ENCODE measurements at regions of chr7 and their contacts with region 1.

Region 1: DNA sequence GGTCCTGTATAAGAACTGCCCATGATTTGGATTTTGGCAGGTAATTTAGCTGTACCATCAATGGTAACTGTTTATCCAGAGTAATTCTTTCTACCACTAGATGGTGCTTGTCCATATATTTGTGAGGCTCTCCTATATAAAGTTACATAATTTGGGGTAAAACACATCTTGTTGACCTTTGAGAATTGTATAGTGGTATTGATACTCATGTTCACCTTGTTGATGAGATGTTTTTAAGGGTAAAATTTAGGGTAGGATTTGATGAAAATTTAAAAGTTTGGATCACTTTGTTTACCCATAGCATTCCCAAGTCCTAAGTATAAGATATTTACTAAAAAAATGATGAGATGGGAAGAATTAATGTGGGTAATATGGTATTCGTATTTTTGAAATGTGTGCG is 31.6 kb downstream of the ST7 start:
- DNase-seq: peak; percentile 52
- H3K4me3 ChIP-seq: no peak overlapping the region
- H3K27ac ChIP-seq: no peak overlapping the region
- H3K4me1 ChIP-seq: peaks cover 0 to 8% of the 10 kb centered on the region in 2 experiments; a peak in 1 of 4 replicates
- H3K27me3 ChIP-seq: no peaks in the 10 kb centered on the region
- CTCF ChIP-seq: peak; percentile 98
- EP300 ChIP-seq: no peak
- RAD21 ChIP-seq: peak; percentile 74

Region 2: GRCh38 chr7:116859323-116859722 is 125.6 kb before region 1 on chr7:
- CTCF ChIA-PET with region 1: no interaction called
- POLR2A ChIA-PET with region 1: no interaction called
- DNase-seq: no peak
- H3K4me3 ChIP-seq: no peak overlapping the region
- H3K27ac ChIP-seq: no peak overlapping the region
- H3K4me1 ChIP-seq: peaks cover 0 to 7% of the 10 kb centered on the region in 2 experiments; a peak in 2 of 4 replicates
- H3K27me3 ChIP-seq: peaks cover 15% of the 10 kb centered on the region
- CTCF ChIP-seq: no peak
- EP300 ChIP-seq: no peak
- RAD21 ChIP-seq: no peak

Region 3: GRCh38 chr7:116953727-116954442 is 31.0 kb before region 1 on chr7:
- CTCF ChIA-PET with region 1: interaction called, 11 read pairs
- POLR2A ChIA-PET with region 1: interaction called, 3 read pairs
- DNase-seq: peak; percentile 92
- H3K4me3 ChIP-seq: peak overlapping the region; percentile 85 to 91
- H3K27ac ChIP-seq: peak overlapping the region; percentile 97
- H3K4me1 ChIP-seq: peaks cover 19 to 23% of the 10 kb centered on the region in 2 experiments; a peak in 3 of 4 replicates
- H3K27me3 ChIP-seq: no peaks in the 10 kb centered on the region
- CTCF ChIP-seq: no peak; the same call in 1 of the 2 replicates
- EP300 ChIP-seq: peak in 1 of 2 experiments; percentile 28; a peak in 1 of 4 replicates
- RAD21 ChIP-seq: no peak

Region 4: GRCh38 chr7:116999311-116999710 is 14.4 kb after region 1 on chr7:
- CTCF ChIA-PET with region 1: interaction called, 35 read pairs
- POLR2A ChIA-PET with region 1: no interaction called
- DNase-seq: no peak
- H3K4me3 ChIP-seq: no peak overlapping the region
- H3K27ac ChIP-seq: peak overlapping the region in 1 of 2 experiments; percentile 14; a peak in 2 of 4 replicates
- H3K4me1 ChIP-seq: no peaks in the 10 kb centered on the region
- H3K27me3 ChIP-seq: no peaks in the 10 kb centered on the region
- CTCF ChIP-seq: no peak
- EP300 ChIP-seq: peak in 1 of 2 experiments; percentile 14; a peak in 1 of 4 replicates
- RAD21 ChIP-seq: no peak

Region 5: DNA sequence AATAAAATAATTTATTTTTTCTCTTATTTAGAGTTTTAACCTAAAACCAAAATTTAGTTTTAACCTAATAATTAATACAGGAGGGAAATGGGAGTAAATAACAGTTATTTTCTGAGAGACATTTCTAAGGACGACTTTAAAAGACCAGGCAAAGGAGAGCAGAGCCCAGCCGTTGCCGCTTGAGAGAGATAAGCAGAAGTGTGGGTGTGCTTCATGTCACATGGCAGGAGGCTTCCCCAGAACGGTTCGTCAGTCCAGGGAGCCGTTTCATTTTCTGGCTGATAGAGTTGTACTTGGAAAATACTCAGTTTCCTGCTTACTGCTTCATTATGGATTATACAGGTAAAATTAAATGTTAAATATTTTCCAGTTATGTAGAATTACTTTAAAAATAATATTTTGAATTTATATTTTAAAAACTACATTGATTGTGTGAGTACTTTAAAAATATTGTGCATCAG is 29.8 kb after region 1 on chr7:
- CTCF ChIA-PET with region 1: interaction called, 58 read pairs
- POLR2A ChIA-PET with region 1: no interaction called
- DNase-seq: peak; percentile 66
- H3K4me3 ChIP-seq: peak overlapping the region; percentile 28 to 34; a peak in 3 of 4 replicates
- H3K27ac ChIP-seq: peak overlapping the region; percentile 30 to 79
- H3K4me1 ChIP-seq: peaks cover 20 to 23% of the 10 kb centered on the region in 2 experiments; a peak in 3 of 4 replicates
- H3K27me3 ChIP-seq: no peaks in the 10 kb centered on the region
- CTCF ChIP-seq: no peak
- EP300 ChIP-seq: peak in 1 of 2 experiments; percentile 27; a peak in 1 of 4 replicates
- RAD21 ChIP-seq: 0 out of 2 replicates have a peak, but pooled peaks have one; percentile 3

Region 6: DNA sequence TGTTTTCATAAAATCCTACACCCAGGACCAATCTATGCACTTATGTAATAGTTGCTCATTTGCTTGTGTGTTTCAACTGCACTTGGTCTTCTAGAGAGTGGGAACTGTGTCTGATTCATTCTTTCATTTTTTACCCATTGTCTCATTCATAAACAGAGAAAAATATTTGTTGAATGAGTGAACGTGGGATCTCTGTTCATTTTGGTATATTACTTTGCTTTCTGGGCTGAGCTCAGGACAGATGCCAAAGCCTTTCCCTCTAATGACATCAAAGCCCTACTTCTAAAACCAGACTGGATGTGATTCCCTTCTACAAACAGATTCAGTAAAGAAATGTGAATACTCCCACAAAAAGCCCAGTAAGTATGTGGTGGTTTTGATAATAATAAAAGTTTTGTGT is 113.5 kb after region 1 on chr7:
- CTCF ChIA-PET with region 1: interaction called, 12 read pairs
- POLR2A ChIA-PET with region 1: no interaction called
- DNase-seq: no peak
- H3K4me3 ChIP-seq: no peak overlapping the region
- H3K27ac ChIP-seq: peak overlapping the region in 1 of 2 experiments; percentile 96; a peak in 2 of 4 replicates
- H3K4me1 ChIP-seq: peaks cover 4 to 9% of the 10 kb centered on the region in 2 experiments; a peak in 3 of 4 replicates
- H3K27me3 ChIP-seq: no peaks in the 10 kb centered on the region
- CTCF ChIP-seq: no peak
- EP300 ChIP-seq: peak in 1 of 2 experiments; percentile 60; a peak in 1 of 4 replicates
- RAD21 ChIP-seq: no peak

Region 7: DNA sequence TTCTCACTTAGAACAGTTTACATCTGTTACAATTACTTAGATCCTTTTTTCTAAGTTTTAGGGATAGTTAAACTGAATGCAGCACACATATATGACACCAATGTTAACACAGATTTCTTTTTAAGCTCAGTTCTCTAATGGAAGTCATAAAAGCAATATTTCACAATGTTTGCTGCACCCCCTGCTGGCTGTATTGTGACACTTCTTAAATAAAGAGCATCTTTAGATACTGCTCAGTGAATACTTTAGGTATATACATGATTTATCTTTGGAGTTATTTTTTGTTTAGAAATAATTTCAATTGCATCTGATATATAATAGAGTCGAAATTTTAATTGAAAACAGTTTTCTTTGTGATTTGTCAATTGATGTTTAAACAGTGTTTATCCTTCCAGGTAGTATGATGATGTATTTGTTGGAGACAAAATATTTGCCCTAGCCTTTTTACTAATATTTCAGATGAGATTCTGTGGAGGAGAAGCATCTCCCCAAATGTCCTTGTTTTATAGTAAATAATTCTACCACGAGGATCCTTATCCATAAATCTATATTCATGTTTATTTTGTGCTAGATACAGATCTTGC is 142.8 kb after region 1 on chr7:
- CTCF ChIA-PET with region 1: interaction called, 668 read pairs
- POLR2A ChIA-PET with region 1: no interaction called
- DNase-seq: no peak
- H3K4me3 ChIP-seq: no peak overlapping the region
- H3K27ac ChIP-seq: peak overlapping the region in 1 of 2 experiments; percentile 94; a peak in 1 of 4 replicates
- H3K4me1 ChIP-seq: peaks cover 23 to 46% of the 10 kb centered on the region in 2 experiments
- H3K27me3 ChIP-seq: no peaks in the 10 kb centered on the region
- CTCF ChIP-seq: peak; percentile 98
- EP300 ChIP-seq: no peak
- RAD21 ChIP-seq: peak; percentile 84

Region 8: DNA sequence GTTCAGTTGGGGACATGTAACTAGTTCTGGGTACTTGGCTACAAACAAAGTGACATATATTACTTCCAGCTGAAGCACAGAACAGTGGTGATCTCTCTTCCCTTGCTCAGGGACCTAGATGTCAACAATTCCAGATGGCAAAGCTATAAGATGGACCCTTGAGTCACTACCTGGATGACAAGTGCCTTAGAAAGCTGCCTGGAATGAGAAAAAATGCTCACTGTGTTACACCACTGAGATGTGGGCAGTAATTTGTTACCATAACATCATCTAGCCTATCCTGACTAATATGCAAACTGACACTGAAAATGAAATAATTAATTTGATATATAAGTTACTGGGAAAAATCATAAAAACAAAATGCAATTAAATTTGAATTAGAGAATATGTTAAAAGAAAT is 904.7 kb after region 1 on chr7:
- CTCF ChIA-PET with region 1: no interaction called
- POLR2A ChIA-PET with region 1: no interaction called
- DNase-seq: no peak
- H3K4me3 ChIP-seq: no peak overlapping the region
- H3K27ac ChIP-seq: no peak overlapping the region
- H3K4me1 ChIP-seq: no peaks in the 10 kb centered on the region
- H3K27me3 ChIP-seq: no peaks in the 10 kb centered on the region; the same call in 1 of the 2 replicates
- CTCF ChIP-seq: no peak
- EP300 ChIP-seq: no peak
- RAD21 ChIP-seq: no peak

Measured in SK-N-SH (cell line).